MCF 10A (cell line): ENCODE measurements at regions of chr11 and their contacts with region 1.

Region 1: GRCh38 chr11:80163011-80163410 is 722.2 kb upstream of the TENM4 start:
- DNase-seq: peak; percentile 68
- H3K4me3 Mint-ChIP-seq: no peak overlapping the region
- H3K27ac Mint-ChIP-seq: peak overlapping the region; percentile 47
- H3K4me1 Mint-ChIP-seq: peaks cover 34% of the 10 kb centered on the region
- H3K27me3 Mint-ChIP-seq: no peaks in the 10 kb centered on the region
- CTCF ChIP-seq: no peak

Region 2: GRCh38 chr11:80320765-80321164 is 157.8 kb after region 1 on chr11:
- CTCF ChIA-PET with region 1: no interaction called
- POLR2A ChIA-PET with region 1: no interaction called
- intact Hi-C with region 1: loop called (anchors 10 kb)
- DNase-seq: peak; percentile 51
- H3K4me3 Mint-ChIP-seq: no peak overlapping the region
- H3K27ac Mint-ChIP-seq: no peak overlapping the region
- H3K4me1 Mint-ChIP-seq: no peaks in the 10 kb centered on the region
- H3K27me3 Mint-ChIP-seq: no peaks in the 10 kb centered on the region
- CTCF ChIP-seq: peak; percentile 30